ENCODE measurements at regions of chr16 and their contacts with region 1.

Region 1: DNA sequence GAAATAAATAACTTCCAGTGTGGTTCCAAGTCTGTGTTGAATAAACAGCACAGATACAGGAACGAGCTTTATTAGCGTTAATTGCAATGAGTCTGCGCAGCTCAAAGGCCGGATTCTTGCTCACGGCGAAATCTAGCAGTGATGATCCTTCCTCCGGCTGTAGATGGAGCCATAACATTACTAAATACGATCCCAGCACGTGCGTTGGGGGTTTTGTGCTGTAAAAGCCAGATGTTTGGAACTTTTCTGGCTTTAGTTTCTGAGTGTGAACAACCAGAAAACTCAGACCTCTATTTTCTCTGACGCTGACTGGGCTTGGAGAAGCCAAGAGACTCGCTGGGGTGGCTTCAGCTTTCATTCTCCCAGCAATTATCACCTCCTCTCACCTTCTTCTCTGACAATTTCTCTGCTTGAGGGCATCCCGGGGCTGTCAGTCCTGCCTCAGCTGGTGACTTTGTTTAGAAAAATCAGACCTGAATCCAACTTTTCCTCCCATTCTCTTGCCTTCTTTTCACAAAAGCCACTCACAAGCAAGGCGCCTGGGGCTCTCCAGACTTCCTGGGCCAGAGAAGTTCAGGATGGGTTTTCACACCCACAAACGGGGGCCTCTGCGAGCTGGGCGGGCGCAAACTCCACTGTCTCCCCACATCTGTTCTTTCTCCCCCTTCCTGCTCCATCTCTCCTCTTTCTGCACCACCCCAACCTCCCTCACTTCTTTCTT is 47.1 kb upstream of the AKTIP start:
- DNase-seq: peak; percentile 20
- ATAC-seq: peak; percentile 88
- H3K4me3 ChIP-seq: no peak overlapping the region
- H3K27ac ChIP-seq: no peak overlapping the region
- H3K4me1 ChIP-seq: no peaks in the 10 kb centered on the region
- H3K27me3 ChIP-seq: no peaks in the 10 kb centered on the region
- CTCF ChIP-seq: peak; percentile 70

Region 2: DNA sequence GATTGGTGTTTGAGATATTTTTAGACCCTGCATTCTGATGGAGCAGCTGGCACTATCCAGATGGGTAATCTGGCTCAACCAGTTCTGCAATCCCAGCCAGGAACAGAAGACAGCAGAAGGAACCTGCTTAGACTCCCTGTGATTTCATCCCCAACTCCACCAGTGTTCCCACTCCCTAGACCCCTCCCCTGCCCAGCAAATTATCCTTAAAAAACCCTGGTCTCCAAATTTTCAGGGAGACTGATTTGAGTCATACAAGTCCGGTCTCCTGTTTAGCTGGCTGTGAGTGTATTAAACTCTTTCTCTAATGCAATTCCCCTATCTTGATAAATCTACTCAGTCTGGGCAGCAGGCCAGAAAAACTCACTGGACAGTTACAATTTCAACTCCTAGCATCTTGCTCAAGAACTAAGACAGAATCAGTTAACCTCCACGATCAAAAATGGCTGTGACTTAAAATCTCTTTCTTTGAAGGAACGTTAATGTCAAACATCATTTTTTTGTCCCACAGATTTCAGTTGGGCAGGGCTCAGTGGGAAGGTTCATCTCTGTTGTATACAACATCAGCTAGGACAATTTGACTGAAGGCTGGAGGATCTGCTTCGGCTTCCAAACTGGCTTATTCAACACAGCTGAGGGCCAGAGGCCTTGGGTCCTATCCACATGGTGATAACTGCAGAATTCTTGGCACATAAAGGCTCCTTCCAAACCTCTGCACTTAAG is 120.7 kb before region 1 on chr16:
- CTCF ChIA-PET with region 1: no interaction called
- POLR2A ChIA-PET with region 1: no interaction called
- in situ Hi-C with region 1: no loop called
- intact Hi-C with region 1: no loop called
- DNase-seq: no peak
- ATAC-seq: no peak
- H3K4me3 ChIP-seq: no peak overlapping the region
- H3K27ac ChIP-seq: no peak overlapping the region
- H3K4me1 ChIP-seq: no peaks in the 10 kb centered on the region
- H3K27me3 ChIP-seq: no peaks in the 10 kb centered on the region
- CTCF ChIP-seq: no peak

Region 3: DNA sequence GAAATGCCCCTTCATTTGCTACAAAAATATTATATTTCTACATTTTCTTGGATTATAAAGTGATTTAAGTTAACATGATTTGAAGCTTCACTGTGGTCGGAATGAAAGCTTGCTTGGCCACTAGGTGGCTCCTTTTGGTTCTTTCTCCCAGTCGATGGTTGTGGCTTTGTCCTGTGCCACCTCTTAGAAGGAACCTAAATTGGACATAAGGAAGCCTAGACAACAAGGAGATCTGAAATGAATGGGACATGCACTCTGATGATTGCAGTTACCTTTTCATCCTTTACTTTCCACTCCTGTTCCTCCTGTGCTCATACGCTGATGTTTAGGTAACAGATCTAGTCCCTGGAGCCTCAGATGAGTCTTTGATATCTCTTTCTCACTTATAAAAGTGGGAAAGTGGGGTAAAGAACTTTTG is 193.0 kb after region 1 on chr16:
- CTCF ChIA-PET with region 1: no interaction called
- POLR2A ChIA-PET with region 1: no interaction called
- in situ Hi-C with region 1: no loop called
- intact Hi-C with region 1: loop called (anchors 10 kb)
- DNase-seq: no peak
- ATAC-seq: 0 out of 2 replicates have a peak, but pooled peaks have one; percentile 49
- H3K4me3 ChIP-seq: no peak overlapping the region
- H3K27ac ChIP-seq: peak overlapping the region; percentile 85; the same call in 1 of the 2 replicates
- H3K4me1 ChIP-seq: peaks cover 22% of the 10 kb centered on the region
- H3K27me3 ChIP-seq: no peaks in the 10 kb centered on the region
- CTCF ChIP-seq: peak; percentile 79

Region 4: DNA sequence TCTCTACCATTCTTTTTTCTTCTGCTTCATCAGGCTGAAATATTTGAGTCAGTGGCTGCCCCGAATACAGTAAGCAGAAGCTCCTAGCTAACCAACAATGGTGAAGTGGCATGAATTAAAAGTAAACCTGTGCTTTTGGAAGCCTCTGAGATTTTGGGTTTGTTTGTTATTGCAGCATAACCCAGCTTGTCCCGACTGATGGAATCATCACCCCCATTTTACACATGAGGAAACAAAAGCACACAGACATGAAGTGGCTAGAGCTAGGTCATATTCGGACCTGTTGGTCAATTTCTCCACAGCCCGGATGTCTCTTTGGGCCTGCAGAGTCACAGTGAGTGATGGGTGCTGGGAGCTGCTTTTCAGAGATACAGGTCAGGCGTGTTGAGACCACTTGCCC is 1419.9 kb after region 1 on chr16:
- CTCF ChIA-PET with region 1: no interaction called
- POLR2A ChIA-PET with region 1: interaction called, 11 read pairs
- in situ Hi-C with region 1: no loop called
- intact Hi-C with region 1: no loop called
- DNase-seq: no peak
- ATAC-seq: no peak
- H3K4me3 ChIP-seq: no peak overlapping the region
- H3K27ac ChIP-seq: no peak overlapping the region
- H3K4me1 ChIP-seq: no peaks in the 10 kb centered on the region
- H3K27me3 ChIP-seq: no peaks in the 10 kb centered on the region
- CTCF ChIP-seq: no peak

Measured in Panc1 (cell line).